Sigmoid colon (tissue), 7 donors: ENCODE measurements at regions of chr12 and their contacts with region 1.

Region 1: GRCh38 chr12:93789767-93790166 is 112.6 kb downstream of the CRADD start:
- DNase-seq: no peak
- H3K4me3 ChIP-seq: no peak overlapping the region
- H3K27ac ChIP-seq: no peak overlapping the region
- H3K4me1 ChIP-seq: peaks cover 0 to 41% (median 25%) of the 10 kb centered on the region in 4 donors
- H3K27me3 ChIP-seq: no peaks in the 10 kb centered on the region
- CTCF ChIP-seq: no peak
- EP300 ChIP-seq: no peak
- POLR2A ChIP-seq: no peak

Region 2: GRCh38 chr12:93616584-93617101 is 173.1 kb before region 1 on chr12:
- intact Hi-C with region 1: no loop called
- DNase-seq: no peak
- H3K4me3 ChIP-seq: no peak overlapping the region
- H3K27ac ChIP-seq: no peak overlapping the region
- H3K4me1 ChIP-seq: no peaks in the 10 kb centered on the region
- H3K27me3 ChIP-seq: no peaks in the 10 kb centered on the region
- CTCF ChIP-seq: no peak
- EP300 ChIP-seq: no peak
- POLR2A ChIP-seq: no peak

Region 3: GRCh38 chr12:93682846-93683261 is 106.9 kb before region 1 on chr12:
- intact Hi-C with region 1: no loop called
- DNase-seq: no peak
- H3K4me3 ChIP-seq: no peak overlapping the region
- H3K27ac ChIP-seq: peak overlapping the region in 3 of 4 donors; percentile 41 to 66 (median 57)
- H3K4me1 ChIP-seq: peaks cover 0 to 61% (median 49%) of the 10 kb centered on the region in 4 donors
- H3K27me3 ChIP-seq: no peaks in the 10 kb centered on the region
- CTCF ChIP-seq: no peak
- EP300 ChIP-seq: no peak
- POLR2A ChIP-seq: no peak

Region 4: DNA sequence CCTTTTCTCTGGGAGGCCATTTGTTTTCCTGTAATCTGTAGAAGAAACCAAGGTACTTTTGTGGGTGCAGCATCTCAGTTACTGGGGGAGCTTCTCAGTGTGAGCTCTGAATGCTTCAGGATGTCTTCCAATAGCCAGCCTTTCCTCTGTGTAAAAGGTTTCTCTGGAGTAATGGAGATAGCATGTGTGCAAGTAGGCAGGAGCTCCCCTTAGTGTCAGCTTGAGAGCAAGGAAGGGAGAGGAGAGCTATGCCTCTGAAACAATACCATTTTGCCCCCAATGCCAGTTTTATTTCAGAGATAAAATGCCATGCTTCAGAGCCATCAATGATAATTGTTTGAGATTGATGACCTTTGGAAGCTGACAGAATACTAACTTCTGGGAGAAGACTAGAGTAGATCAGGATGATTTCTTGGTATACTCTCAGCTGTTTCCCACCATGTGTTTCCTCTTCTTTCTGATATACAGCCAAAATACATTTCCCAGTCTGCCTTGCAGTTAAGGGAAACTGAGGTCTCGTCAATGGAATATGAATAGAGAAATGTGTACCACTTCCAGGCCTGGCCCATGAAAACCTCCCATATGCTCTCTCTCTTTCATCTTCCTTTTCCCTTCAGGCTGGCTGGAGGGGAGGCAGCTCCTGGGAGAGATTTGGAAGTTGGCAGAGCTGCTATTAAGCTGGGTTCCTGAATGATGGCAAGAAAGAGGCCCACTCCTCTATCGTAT is 13.1 kb after region 1 on chr12:
- intact Hi-C with region 1: loop called (anchors 2 kb)
- DNase-seq: no peak
- H3K4me3 ChIP-seq: no peak overlapping the region
- H3K27ac ChIP-seq: peak overlapping the region; percentile 78 to 91 (median 86)
- H3K4me1 ChIP-seq: peaks cover 0 to 54% (median 36%) of the 10 kb centered on the region in 4 donors
- H3K27me3 ChIP-seq: no peaks in the 10 kb centered on the region
- CTCF ChIP-seq: peak in 1 of 4 experiments; percentile 13
- EP300 ChIP-seq: no peak
- POLR2A ChIP-seq: no peak

Region 5: DNA sequence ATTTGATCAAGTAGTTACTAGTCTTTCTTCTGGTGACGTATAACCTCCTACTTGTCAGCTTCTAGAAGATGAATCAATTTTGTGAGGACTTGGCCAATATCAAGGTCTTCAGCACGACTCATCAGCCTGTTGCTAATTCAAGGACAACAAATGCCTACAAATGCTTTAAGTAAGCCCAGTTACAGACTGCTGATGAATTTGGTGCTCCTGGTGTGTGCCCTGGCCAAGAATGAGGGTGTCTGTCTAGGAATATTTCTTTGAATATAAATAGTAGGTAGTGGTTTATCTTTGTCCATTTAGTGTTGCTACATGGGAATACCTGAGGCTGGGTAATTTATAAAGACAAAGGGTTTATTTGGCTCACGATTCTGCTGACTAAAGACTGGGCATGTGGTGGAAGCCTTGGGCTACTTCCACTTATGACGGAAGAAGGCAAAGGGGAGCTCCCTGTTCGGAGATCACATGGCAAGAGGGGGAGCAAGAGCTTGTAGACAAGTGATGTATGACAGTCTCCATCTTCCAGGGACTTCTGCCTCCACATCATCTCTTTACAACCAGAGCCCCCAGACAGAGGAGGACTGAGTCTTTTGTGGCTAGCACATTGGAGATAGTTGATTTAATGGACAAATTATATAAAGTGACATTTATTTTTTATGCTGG is 67.6 kb after region 1 on chr12:
- intact Hi-C with region 1: no loop called
- DNase-seq: no peak
- H3K4me3 ChIP-seq: no peak overlapping the region
- H3K27ac ChIP-seq: peak overlapping the region in 2 of 4 donors; percentile 6 to 27
- H3K4me1 ChIP-seq: peaks cover 0 to 16% (median 11%) of the 10 kb centered on the region in 4 donors
- H3K27me3 ChIP-seq: no peaks in the 10 kb centered on the region
- CTCF ChIP-seq: no peak
- EP300 ChIP-seq: no peak
- POLR2A ChIP-seq: no peak